PC-9 (cell line): ENCODE measurements at regions of chr1 and their contacts with region 1.

Region 1: DNA sequence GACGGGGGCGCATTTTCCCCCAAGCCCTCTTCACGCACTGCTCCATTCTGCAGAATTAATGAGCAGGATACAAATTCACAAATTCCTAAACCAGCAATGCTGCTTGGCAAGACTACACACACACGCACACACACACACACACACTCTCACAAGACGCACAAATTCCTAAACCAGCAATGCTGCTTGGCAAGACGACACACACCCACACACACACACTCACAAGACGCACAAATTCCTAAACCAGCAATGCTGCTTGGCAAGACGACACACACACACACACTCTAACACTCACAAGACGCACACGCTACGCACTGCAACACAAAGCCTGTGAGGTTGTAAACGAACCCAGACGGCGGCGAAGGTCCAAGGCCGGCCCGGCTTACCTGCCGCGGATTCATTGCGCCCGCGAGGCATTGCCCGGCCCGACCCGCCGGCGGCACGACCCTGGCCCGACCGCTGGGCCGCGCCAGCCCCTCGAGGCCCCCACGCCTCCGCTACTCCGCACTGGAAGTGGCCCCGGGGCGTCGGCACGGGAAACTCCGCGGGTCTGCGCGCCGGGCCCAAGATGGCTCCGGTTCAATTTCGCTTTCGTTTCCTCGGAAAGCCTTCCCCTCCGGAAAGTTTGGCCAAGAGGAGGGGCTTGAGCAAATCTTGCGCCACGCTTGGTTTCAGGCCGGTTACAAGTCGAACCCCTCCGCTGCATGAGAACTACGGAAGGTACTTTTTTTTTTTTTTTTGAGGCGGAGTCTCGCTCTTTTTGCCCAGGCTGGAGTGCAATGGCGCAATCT is at the start of gene ADAR:
- DNase-seq: peak; percentile 84 to 88
- H3K4me3 ChIP-seq: peak within 1 kb of the TSS; percentile 100
- H3K27ac ChIP-seq: peak within 1 kb of the TSS; percentile 90
- H3K4me1 ChIP-seq: peaks cover 23% of the 10 kb centered on the region
- H3K27me3 ChIP-seq: no peaks in the 10 kb centered on the region
- CTCF ChIP-seq: no peak
- total RNA-seq, gene ADAR: 99.6 and 120 TPM in 2 replicates

Region 2: DNA sequence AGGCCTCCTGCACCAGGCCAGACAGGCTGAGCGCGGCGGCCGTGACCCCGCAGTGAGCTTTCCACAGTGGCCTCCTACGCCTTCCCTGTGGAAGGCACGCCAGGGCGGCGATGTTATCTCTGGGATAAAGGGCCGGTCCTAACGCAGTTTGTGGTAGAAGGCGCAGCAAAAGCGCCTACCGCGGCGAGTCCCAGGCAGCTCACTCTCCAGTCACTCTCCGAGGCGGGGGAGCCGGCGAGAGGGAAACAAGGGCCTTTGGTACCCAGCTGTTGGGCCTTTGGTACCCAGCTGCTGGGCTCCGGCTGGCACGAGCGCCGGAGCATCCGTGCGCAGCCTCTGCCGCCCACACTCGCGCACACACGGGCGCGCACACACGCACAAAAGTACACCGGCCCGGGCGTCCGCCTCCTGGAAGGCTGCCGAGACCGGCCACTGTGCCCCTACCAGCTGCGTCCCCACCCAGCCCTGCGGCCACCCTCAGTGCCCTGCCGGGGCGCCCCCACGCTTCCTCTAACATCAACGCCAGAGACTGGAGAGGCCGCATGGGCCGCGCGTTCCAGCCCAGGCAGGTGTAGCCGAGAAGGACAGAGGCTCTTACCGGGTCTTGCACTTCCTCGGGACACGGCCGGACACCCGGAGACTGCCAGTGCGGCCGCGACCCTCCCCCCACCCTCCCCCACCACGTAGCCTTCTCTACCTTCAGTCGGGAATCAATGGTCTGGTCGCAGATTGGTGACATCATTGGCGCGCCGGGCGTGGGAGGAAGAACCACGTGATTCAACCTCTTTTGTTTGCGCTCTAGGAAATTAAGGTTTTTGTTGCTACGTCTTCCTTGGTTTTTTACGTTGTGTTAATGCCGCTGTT is 19.7 kb after region 1 on chr1:
- CTCF ChIA-PET with region 1: no interaction called
- POLR2A ChIA-PET with region 1: no interaction called
- intact Hi-C with region 1: loop called (anchors 2 kb)
- DNase-seq: peak; percentile 74
- H3K4me3 ChIP-seq: peak overlapping the region; percentile 95
- H3K27ac ChIP-seq: peak overlapping the region; percentile 28
- H3K4me1 ChIP-seq: peaks cover 7% of the 10 kb centered on the region
- H3K27me3 ChIP-seq: peaks cover 16% of the 10 kb centered on the region
- CTCF ChIP-seq: no peak

Region 3: DNA sequence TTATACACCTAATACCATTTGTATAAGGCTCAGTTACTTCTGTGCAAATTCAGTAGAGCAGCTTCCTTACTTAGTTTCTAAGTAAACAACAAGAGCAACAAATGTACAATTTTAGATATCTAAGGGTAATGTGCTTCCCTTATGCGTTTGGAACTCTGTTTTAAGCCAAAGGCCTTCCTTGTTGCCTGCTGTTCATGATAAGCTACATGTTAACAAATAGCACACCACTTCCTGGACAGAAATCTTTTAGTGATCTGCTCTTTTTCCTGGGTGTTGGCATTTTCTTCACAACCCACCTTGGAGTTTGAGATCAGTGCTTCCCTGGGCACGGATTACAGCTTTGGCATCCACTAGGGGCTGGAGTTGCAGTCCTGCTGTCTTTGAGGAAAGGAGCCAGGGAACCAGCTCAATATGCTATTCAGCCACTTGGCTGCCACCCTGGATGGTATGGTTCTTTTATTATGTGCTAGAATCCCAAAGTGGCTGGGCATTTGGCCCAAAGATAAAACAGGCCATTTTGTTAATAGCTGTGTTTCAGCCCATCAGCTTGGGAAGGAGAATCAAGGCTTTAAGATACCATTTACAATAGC is 55.8 kb after region 1 on chr1:
- CTCF ChIA-PET with region 1: no interaction called
- POLR2A ChIA-PET with region 1: no interaction called
- intact Hi-C with region 1: no loop called
- DNase-seq: no peak
- H3K4me3 ChIP-seq: no peak overlapping the region
- H3K27ac ChIP-seq: no peak overlapping the region
- H3K4me1 ChIP-seq: no peaks in the 10 kb centered on the region
- H3K27me3 ChIP-seq: peaks cover 30% of the 10 kb centered on the region; the same call in 1 of the 2 replicates
- CTCF ChIP-seq: no peak

Region 4: GRCh38 chr1:155135415-155136028 is 527.7 kb after region 1 on chr1 and contains the start of gene SLC50A1:
- CTCF ChIA-PET with region 1: no interaction called
- POLR2A ChIA-PET with region 1: interaction called, 18 read pairs
- intact Hi-C with region 1: no loop called
- DNase-seq: peak; percentile 80 to 94
- H3K4me3 ChIP-seq: peak within 1 kb of the TSS; percentile 78
- H3K27ac ChIP-seq: peak within 1 kb of the TSS; percentile 99
- H3K4me1 ChIP-seq: peaks cover 54% of the 10 kb centered on the region
- H3K27me3 ChIP-seq: no peaks in the 10 kb centered on the region
- CTCF ChIP-seq: 0 out of 2 replicates have a peak, but pooled peaks have one; percentile 15
- total RNA-seq, gene SLC50A1: 54.9 and 67.6 TPM in 2 replicates